K562 (cell line): ENCODE measurements at regions of chr20 and their contacts with region 1.

Region 1: DNA sequence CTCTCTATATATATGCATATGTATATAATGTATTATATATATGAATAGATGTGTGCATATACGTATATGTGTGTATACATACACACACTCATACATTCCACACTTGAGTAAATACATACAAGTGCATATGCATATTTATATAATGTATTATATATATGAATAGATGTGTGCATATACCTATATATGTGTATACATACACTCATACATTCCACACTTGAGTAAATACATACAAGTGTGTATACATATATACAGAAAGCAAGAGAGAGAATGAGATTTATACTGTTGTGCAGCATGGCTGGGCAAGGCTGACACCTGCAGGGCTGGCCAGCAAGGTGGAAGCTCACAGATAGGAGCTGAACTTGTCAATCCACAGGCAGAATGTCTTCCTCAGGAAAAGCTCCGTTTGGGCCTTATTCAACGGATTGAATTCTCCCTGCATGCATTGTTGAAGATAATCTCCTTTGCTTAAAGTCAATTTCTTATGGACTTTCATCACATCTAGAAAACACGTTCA is 256.8 kb downstream of the ZNF217 start:
- DNase-seq: no peak
- ATAC-seq: peak; percentile 71
- H3K4me3 ChIP-seq: no peak overlapping the region
- H3K27ac ChIP-seq: no peak overlapping the region
- H3K4me1 ChIP-seq: peaks cover 6 to 16% of the 10 kb centered on the region in 2 experiments
- H3K27me3 ChIP-seq: peaks cover 0 to 7% of the 10 kb centered on the region in 2 experiments; a peak in 1 of 5 replicates
- CTCF ChIP-seq: peak; percentile 33 to 48 (median 37); a peak in 4 of 6 replicates
- EP300 ChIP-seq: no peak
- POLR2A ChIP-seq: no peak
- RAD21 ChIP-seq: peak; percentile 20 to 54; a peak in 2 of 4 replicates

Region 2: DNA sequence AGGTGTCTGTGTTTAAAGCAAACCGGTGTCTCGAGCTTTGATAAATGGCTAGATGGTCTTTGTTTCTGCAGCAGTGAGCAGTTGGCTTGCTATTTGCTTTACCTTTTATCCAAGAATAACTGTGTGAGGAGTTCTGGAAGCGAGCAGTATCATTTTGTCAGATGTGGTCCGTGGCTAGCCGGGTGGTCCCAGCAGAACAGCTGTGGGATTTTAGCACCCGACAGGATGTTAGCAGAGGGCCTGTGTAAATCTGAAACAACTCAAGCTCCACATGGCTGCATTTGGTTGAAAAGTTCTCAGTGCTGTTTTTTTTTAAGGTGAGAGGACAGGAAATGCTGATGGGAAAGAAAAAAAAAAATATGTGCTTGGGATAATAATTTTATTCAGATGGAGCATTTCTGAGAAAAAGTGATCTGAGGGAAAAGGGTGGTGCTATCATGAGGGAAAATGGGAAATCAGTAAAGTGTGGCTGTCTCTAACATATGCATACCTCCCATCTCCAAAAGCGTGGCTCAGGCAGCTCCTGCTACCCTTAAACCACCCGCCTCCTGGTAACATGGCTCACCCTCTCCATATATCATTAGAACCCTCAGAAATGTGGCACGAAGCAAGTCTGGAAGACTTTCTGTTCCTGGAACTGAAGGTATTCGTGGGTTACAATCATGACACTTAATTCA is 149.3 kb before region 1 on chr20:
- CTCF ChIA-PET with region 1: no interaction called
- POLR2A ChIA-PET with region 1: no interaction called
- in situ Hi-C with region 1: no loop called
- intact Hi-C with region 1: no loop called
- DNase-seq: no peak
- ATAC-seq: no peak
- H3K4me3 ChIP-seq: no peak overlapping the region
- H3K27ac ChIP-seq: no peak overlapping the region
- H3K4me1 ChIP-seq: peaks cover 0 to 3% of the 10 kb centered on the region in 2 experiments; a peak in 2 of 5 replicates
- H3K27me3 ChIP-seq: no peaks in the 10 kb centered on the region
- CTCF ChIP-seq: no peak
- EP300 ChIP-seq: no peak
- POLR2A ChIP-seq: no peak
- RAD21 ChIP-seq: no peak

Region 3: DNA sequence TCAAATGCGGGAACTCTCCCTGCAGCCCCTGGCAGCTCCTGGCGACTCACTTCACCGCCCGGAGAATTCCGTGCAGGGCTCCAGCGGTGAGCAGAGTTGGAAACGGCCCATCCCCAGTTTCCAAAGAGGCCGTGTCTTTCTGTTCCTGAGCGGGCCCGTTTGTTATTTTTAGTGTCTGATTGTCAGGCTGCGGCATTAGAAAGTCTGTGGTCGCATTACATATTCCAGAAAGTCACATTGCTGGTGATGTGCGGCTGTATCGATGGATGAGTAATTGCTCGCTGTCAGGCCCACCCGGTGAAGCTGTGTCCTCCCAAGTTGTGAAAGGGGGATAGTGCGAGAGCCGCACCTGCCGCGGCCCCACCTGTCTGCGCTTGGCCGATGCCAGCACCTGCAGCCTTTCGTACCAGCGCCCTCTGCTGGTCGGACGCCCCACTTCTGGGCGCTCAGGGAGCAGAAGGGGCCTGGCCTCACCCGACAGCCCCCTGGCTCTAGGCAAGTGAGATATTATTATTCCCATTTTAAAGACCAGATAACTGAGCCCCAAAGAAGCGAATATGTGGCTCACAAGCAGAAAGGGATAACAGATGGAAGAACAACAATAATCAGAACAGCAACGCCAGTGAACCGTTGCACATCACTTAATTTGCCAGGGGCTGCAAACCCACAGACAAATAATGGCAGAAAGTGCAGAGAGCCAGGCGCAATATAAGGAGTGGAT is 119.8 kb before region 1 on chr20:
- CTCF ChIA-PET with region 1: no interaction called
- POLR2A ChIA-PET with region 1: interaction called, 3 read pairs
- in situ Hi-C with region 1: no loop called
- intact Hi-C with region 1: loop called (anchors 5 kb)
- DNase-seq: peak; percentile 72 to 83 (median 78)
- ATAC-seq: peak; percentile 99
- H3K4me3 ChIP-seq: no peak overlapping the region
- H3K27ac ChIP-seq: no peak overlapping the region
- H3K4me1 ChIP-seq: peaks cover under 1 to 5% of the 10 kb centered on the region in 2 experiments; a peak in 4 of 5 replicates
- H3K27me3 ChIP-seq: peaks cover 0 to 2% of the 10 kb centered on the region in 2 experiments; a peak in 2 of 5 replicates
- CTCF ChIP-seq: peak; percentile 81 to 91 (median 88)
- EP300 ChIP-seq: no peak
- POLR2A ChIP-seq: no peak
- RAD21 ChIP-seq: peak; percentile 80 to 89

Region 4: DNA sequence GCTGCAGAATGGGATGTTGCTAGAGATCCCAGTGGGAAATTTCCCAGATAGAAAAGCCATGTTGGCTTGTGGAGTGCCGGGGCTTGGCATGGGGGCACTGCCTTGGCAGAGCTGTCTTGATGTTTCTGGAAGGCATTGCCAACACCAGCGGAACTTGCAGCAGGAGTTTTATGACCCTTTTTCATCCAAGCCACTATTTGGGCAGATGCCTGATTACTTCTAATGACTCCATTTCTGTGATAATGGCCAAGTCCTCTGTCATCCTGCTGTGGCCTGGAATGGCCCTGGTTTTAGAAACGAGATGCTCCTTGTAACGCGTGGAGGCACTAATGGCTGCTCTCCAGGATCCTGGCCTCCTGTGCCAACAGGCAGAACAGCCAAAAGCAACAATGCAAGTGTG is 27.8 kb after region 1 on chr20:
- CTCF ChIA-PET with region 1: no interaction called
- POLR2A ChIA-PET with region 1: no interaction called
- in situ Hi-C with region 1: no loop called
- intact Hi-C with region 1: no loop called
- DNase-seq: no peak
- ATAC-seq: no peak
- H3K4me3 ChIP-seq: no peak overlapping the region
- H3K27ac ChIP-seq: no peak overlapping the region
- H3K4me1 ChIP-seq: no peaks in the 10 kb centered on the region; a peak in 1 of 5 replicates
- H3K27me3 ChIP-seq: peaks cover 10 to 19% of the 10 kb centered on the region in 2 experiments
- CTCF ChIP-seq: no peak
- EP300 ChIP-seq: no peak
- POLR2A ChIP-seq: no peak
- RAD21 ChIP-seq: no peak